CD4-positive, alpha-beta T cell (primary cell): ENCODE measurements at regions of chr4 and their contacts with region 1.

Region 1: GRCh38 chr4:6673660-6674499 is 19.8 kb upstream of the S100P start:
- DNase-seq: peak; percentile 87 to 99 (median 94)
- ATAC-seq: peak; percentile 82
- H3K4me3 ChIP-seq: peak overlapping the region; percentile 64
- H3K4me3 Mint-ChIP-seq: peak overlapping the region; percentile 97
- H3K27ac ChIP-seq: peak overlapping the region; percentile 72 to 76
- H3K27ac Mint-ChIP-seq: peak overlapping the region; percentile 96
- H3K4me1 ChIP-seq: peaks cover 53% of the 10 kb centered on the region
- H3K4me1 Mint-ChIP-seq: peaks cover 50% of the 10 kb centered on the region
- H3K27me3 ChIP-seq: no peaks in the 10 kb centered on the region
- H3K27me3 Mint-ChIP-seq: no peaks in the 10 kb centered on the region
- CTCF ChIP-seq: no peak

Region 2: GRCh38 chr4:6663596-6664393 is 10.1 kb before region 1 on chr4:
- CTCF ChIA-PET with region 1: interaction called, 23 read pairs
- POLR2A ChIA-PET with region 1: interaction called, 42 read pairs
- intact Hi-C with region 1: no loop called
- DNase-seq: no peak
- ATAC-seq: no peak
- H3K4me3 ChIP-seq: peak overlapping the region; percentile 48
- H3K4me3 Mint-ChIP-seq: peak overlapping the region; percentile 30
- H3K27ac ChIP-seq: no peak overlapping the region
- H3K27ac Mint-ChIP-seq: no peak overlapping the region
- H3K4me1 ChIP-seq: peaks cover 24% of the 10 kb centered on the region
- H3K4me1 Mint-ChIP-seq: no peaks in the 10 kb centered on the region
- H3K27me3 ChIP-seq: peaks cover 6 to 7% of the 10 kb centered on the region in 2 experiments
- H3K27me3 Mint-ChIP-seq: peaks cover 29% of the 10 kb centered on the region
- CTCF ChIP-seq: no peak

Region 3: GRCh38 chr4:6701371-6701770 is 27.5 kb after region 1 on chr4:
- CTCF ChIA-PET with region 1: interaction called, 68 read pairs
- POLR2A ChIA-PET with region 1: interaction called, 245 read pairs
- intact Hi-C with region 1: loop called in 1 of 2 experiments (anchors 1 kb)
- DNase-seq: peak in 10 of 14 experiments; percentile 25 to 73 (median 46)
- ATAC-seq: peak; percentile 30
- H3K4me3 ChIP-seq: no peak overlapping the region
- H3K4me3 Mint-ChIP-seq: no peak overlapping the region
- H3K27ac ChIP-seq: no peak overlapping the region
- H3K27ac Mint-ChIP-seq: no peak overlapping the region
- H3K4me1 ChIP-seq: peaks cover 60% of the 10 kb centered on the region
- H3K4me1 Mint-ChIP-seq: peaks cover 69% of the 10 kb centered on the region
- H3K27me3 ChIP-seq: no peaks in the 10 kb centered on the region
- H3K27me3 Mint-ChIP-seq: no peaks in the 10 kb centered on the region
- CTCF ChIP-seq: peak; percentile 22

Region 4: GRCh38 chr4:6783053-6783981 is 109.4 kb after region 1 on chr4:
- CTCF ChIA-PET with region 1: interaction called, 10 read pairs
- POLR2A ChIA-PET with region 1: interaction called, 6 read pairs
- intact Hi-C with region 1: loop called (anchors 1 to 10 kb)
- DNase-seq: peak; percentile 78 to 94 (median 86)
- ATAC-seq: peak; percentile 78
- H3K4me3 ChIP-seq: peak overlapping the region; percentile 77
- H3K4me3 Mint-ChIP-seq: peak overlapping the region; percentile 92
- H3K27ac ChIP-seq: peak overlapping the region; percentile 92 to 96
- H3K27ac Mint-ChIP-seq: peak overlapping the region; percentile 86
- H3K4me1 ChIP-seq: peaks cover 43% of the 10 kb centered on the region
- H3K4me1 Mint-ChIP-seq: peaks cover 59% of the 10 kb centered on the region
- H3K27me3 ChIP-seq: no peaks in the 10 kb centered on the region
- H3K27me3 Mint-ChIP-seq: no peaks in the 10 kb centered on the region
- CTCF ChIP-seq: no peak

Region 5: DNA sequence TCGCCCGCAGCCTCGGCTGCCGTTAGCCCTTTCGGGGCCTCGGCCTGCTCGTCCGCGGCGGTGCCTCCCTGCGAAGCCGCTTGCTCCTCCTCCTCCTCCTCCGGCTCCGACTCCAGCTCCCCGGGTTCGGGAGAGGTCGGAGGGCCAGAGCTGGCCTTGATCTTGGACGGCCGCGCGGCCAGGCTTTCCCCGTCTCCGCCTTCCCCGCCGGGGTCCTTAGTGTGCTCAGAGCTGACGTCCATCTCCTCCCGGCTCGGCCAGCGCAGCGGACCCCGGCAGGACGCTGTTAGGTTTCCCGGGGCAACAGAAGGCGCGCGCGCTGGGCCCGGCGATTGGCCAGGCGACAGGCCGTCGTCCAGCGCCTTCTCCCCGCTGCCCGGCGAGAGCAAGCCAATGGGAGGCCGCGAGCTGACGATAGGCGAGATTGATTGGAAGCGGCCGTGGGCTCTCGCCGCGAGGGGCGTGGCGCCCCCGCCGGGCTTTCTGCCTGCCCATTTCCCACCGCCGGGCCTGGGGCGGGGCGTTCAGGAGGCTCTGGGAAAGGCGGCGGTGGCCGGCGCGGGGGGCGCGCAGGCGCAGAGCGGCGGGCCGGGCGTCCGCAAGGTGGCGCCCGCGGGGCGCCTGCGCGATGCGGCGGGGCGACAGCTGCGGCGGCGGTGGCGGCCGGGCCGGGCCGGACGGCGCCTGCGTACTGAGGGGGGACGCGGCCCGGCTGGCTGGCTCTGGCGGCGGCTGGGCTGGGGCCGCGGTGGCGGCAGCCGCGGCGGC is 369.0 kb after region 1 on chr4 and contains the start of gene TADA2B:
- CTCF ChIA-PET with region 1: interaction called, 3 read pairs
- POLR2A ChIA-PET with region 1: interaction called, 12 read pairs
- intact Hi-C with region 1: no loop called
- DNase-seq: peak; percentile 72 to 97 (median 89)
- ATAC-seq: peak; percentile 76
- H3K4me3 ChIP-seq: peak within 1 kb of the TSS; percentile 87
- H3K4me3 Mint-ChIP-seq: peak within 1 kb of the TSS; percentile 93
- H3K27ac ChIP-seq: peak within 1 kb of the TSS; percentile 44 to 81
- H3K27ac Mint-ChIP-seq: peak within 1 kb of the TSS; percentile 82
- H3K4me1 ChIP-seq: peaks cover 55% of the 10 kb centered on the region
- H3K4me1 Mint-ChIP-seq: peaks cover 57% of the 10 kb centered on the region
- H3K27me3 ChIP-seq: no peaks in the 10 kb centered on the region
- H3K27me3 Mint-ChIP-seq: no peaks in the 10 kb centered on the region
- CTCF ChIP-seq: peak; percentile 22
- total RNA-seq, gene TADA2B: 41.5 to 44.6 TPM

Region 6: GRCh38 chr4:7539659-7540058 is 865.8 kb after region 1 on chr4:
- CTCF ChIA-PET with region 1: no interaction called
- POLR2A ChIA-PET with region 1: no interaction called
- intact Hi-C with region 1: no loop called
- DNase-seq: peak in 13 of 14 experiments; percentile 6 to 80 (median 41)
- ATAC-seq: peak; percentile 89
- H3K4me3 ChIP-seq: no peak overlapping the region
- H3K4me3 Mint-ChIP-seq: no peak overlapping the region
- H3K27ac ChIP-seq: peak overlapping the region in 1 of 2 donors; percentile 40
- H3K27ac Mint-ChIP-seq: no peak overlapping the region
- H3K4me1 ChIP-seq: peaks cover 6% of the 10 kb centered on the region
- H3K4me1 Mint-ChIP-seq: no peaks in the 10 kb centered on the region
- H3K27me3 ChIP-seq: no peaks in the 10 kb centered on the region
- H3K27me3 Mint-ChIP-seq: no peaks in the 10 kb centered on the region
- CTCF ChIP-seq: no peak